Mammary epithelial cell (primary cell): ENCODE measurements at regions of chr10 and their contacts with region 1.

Region 1: GRCh38 chr10:70656489-70656888 is 15.8 kb upstream of the ADAMTS14 start:
- DNase-seq: peak; percentile 99
- H3K4me3 ChIP-seq: no peak overlapping the region
- H3K27ac ChIP-seq: peak overlapping the region; percentile 82
- H3K4me1 ChIP-seq: peaks cover 39% of the 10 kb centered on the region
- H3K27me3 ChIP-seq: no peaks in the 10 kb centered on the region
- CTCF ChIP-seq: no peak

Region 2: GRCh38 chr10:70558871-70559810 is 97.3 kb before region 1 on chr10:
- CTCF ChIA-PET with region 1: no interaction called
- dilution Hi-C with region 1: loop called (anchors 5 kb)
- in situ Hi-C with region 1: no loop called
- intact Hi-C with region 1: loop called (anchors 5 kb)
- DNase-seq: peak; percentile 42
- H3K4me3 ChIP-seq: no peak overlapping the region
- H3K27ac ChIP-seq: no peak overlapping the region
- H3K4me1 ChIP-seq: no peaks in the 10 kb centered on the region
- H3K27me3 ChIP-seq: peaks cover 3% of the 10 kb centered on the region
- CTCF ChIP-seq: peak; percentile 47 to 60

Region 3: DNA sequence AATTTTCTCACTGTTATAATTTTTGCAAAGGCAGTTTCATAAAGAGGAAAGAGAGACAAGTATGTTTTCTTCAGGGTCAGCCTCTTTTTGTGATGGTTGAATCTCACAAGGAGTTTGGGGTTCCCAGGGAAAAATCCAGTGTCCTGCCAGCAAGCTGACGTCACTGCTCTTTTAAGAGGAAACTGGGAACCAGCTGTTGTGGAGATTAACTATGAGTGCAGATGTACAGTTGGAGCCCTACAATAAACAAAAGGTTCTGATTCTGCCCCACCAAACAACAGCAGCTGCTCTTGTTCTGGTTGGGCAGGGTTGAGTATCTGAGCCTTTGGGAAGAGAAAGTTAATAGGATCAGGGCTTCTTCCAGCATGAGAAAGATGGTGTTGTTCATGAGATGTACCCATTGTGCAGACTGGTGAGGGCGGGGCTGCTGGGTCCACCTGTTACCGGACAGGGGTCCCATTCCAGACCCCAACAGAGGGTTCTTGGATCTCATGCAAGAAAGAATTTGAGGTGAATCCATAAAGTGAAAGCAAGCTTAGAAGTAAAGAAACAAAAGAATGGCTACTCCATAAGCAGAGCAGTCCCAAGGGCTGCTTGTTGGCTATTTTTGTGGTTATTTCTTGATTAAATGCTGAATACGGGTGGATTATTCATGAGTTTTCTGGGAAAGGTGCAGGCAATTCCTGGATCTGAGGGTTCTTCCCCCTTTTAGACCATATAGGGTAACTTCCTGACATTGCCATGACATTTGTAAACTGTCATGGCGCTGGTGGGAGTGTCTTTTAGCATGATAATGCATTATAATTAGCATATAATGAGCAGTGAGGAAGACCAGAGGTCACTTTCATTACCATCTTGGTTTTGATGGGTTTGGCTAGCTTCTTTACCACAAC is 66.5 kb before region 1 on chr10:
- CTCF ChIA-PET with region 1: no interaction called
- dilution Hi-C with region 1: loop called (anchors 5 kb)
- in situ Hi-C with region 1: no loop called
- intact Hi-C with region 1: no loop called
- DNase-seq: no peak
- H3K4me3 ChIP-seq: no peak overlapping the region
- H3K27ac ChIP-seq: no peak overlapping the region
- H3K4me1 ChIP-seq: no peaks in the 10 kb centered on the region
- H3K27me3 ChIP-seq: peaks cover 16% of the 10 kb centered on the region
- CTCF ChIP-seq: no peak

Region 4: DNA sequence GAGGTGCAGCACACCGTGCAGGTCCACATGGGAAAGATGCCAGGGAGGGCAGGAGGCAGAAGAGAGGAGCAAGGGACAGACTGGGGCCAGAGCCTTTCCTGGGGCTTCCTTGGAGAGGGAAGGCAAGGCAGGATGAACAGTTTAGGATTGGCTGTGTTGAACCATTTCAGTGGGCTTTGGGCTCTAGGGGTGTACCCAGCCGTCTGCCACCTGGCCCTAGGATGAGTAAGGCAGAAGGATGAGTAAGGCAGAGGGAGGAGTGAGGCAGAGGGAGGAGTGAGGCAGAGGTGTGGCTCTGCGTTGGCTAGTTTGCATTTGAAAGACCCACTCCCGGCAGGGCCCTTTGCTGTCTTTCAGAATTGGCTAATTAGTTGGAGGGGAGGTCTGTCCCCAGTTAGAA is 22.5 kb before region 1 on chr10:
- CTCF ChIA-PET with region 1: no interaction called
- dilution Hi-C with region 1: no loop called
- in situ Hi-C with region 1: no loop called
- intact Hi-C with region 1: loop called (anchors 2 kb)
- DNase-seq: peak; percentile 61
- H3K4me3 ChIP-seq: no peak overlapping the region
- H3K27ac ChIP-seq: peak overlapping the region; percentile 18
- H3K4me1 ChIP-seq: peaks cover 9% of the 10 kb centered on the region
- H3K27me3 ChIP-seq: no peaks in the 10 kb centered on the region
- CTCF ChIP-seq: no peak

Region 5: GRCh38 chr10:70679498-70679897 is 23.0 kb after region 1 on chr10:
- CTCF ChIA-PET with region 1: no interaction called
- dilution Hi-C with region 1: no loop called
- in situ Hi-C with region 1: no loop called
- intact Hi-C with region 1: no loop called
- DNase-seq: no peak
- H3K4me3 ChIP-seq: no peak overlapping the region
- H3K27ac ChIP-seq: no peak overlapping the region
- H3K4me1 ChIP-seq: no peaks in the 10 kb centered on the region
- H3K27me3 ChIP-seq: no peaks in the 10 kb centered on the region
- CTCF ChIP-seq: no peak